Caco-2 (cell line): ENCODE measurements at regions of chr1 and their contacts with region 1.

Region 1: DNA sequence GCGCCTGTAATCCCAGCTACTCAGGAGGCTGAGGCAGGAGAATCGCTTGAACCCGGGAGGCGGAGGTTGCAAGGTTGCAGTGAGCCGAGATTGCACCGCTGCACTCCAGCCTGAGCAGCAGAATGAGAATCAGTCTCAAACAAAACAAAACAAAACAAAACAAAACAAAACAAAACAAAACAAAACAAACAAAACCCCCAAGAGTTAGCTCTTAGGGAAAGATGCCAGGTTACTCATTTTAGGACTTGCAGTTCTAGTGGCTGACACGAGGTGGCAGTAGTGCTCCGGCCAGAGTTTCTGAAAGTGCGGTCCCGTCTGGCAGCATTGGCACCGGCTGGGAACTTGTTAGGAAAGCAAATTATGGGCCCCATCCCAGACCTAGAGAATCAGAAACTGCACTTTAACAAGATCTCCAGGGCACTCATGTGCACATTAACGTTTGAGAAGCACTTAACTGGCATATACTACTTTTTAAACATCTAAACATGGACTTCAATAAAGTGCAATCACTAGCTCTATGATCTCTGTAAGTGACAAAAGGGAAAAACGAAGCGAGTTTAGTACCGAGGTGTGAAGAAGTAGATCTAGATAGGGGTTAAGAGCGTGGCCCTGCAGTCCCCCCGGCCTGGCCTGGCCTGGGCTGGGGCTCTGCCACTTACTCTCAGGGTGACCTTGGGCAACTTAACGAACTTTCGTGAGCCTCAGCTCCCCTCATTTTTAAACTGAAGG is 41.9 kb upstream of the TNFRSF1B start:
- DNase-seq: peak; percentile 56 to 78
- H3K4me3 ChIP-seq: no peak overlapping the region
- H3K4me3 Mint-ChIP-seq: no peak overlapping the region
- H3K27ac Mint-ChIP-seq: no peak overlapping the region
- H3K4me1 ChIP-seq: no peaks in the 10 kb centered on the region
- H3K4me1 Mint-ChIP-seq: no peaks in the 10 kb centered on the region
- H3K27me3 ChIP-seq: no peaks in the 10 kb centered on the region
- H3K27me3 Mint-ChIP-seq: peaks cover 6% of the 10 kb centered on the region
- CTCF ChIP-seq: peak; percentile 88 to 93

Region 2: DNA sequence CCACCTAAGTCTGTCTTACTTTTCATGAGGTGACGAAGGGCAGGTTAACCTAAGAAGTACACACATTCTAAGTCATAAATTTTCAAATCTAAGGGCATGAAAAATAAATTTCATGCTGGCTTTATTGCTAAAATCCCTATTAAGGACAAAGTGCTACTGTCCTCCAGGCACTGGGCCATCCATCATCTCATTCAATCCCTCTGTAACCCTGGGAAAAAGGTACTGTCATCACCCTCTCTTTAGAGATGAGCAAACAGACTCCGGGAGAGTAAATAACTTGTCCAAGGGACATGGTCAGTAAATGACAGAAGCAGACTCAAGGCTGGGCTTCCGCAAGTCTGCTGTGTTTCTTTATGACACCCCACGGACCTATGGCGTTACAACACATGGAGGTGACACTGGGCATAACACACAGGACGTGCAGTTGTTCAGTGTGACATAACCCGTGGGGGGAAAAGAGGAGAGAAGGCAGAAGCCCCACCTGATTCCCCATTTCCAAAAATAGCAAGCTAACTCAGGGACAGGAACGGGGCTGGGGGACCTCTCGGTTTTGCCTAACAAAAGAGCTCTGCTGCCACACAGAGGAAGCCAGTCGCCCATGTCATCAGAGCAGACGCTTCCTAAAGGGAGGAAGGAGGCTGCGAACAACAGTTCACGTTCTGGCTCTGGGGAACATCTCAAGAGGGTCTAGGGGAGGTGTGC is 1052.5 kb before region 1 on chr1:
- CTCF ChIA-PET with region 1: no interaction called
- POLR2A ChIA-PET with region 1: no interaction called
- intact Hi-C with region 1: no loop called
- DNase-seq: no peak
- H3K4me3 ChIP-seq: no peak overlapping the region
- H3K4me3 Mint-ChIP-seq: no peak overlapping the region
- H3K27ac Mint-ChIP-seq: no peak overlapping the region
- H3K4me1 ChIP-seq: no peaks in the 10 kb centered on the region
- H3K4me1 Mint-ChIP-seq: no peaks in the 10 kb centered on the region
- H3K27me3 ChIP-seq: no peaks in the 10 kb centered on the region
- H3K27me3 Mint-ChIP-seq: no peaks in the 10 kb centered on the region
- CTCF ChIP-seq: no peak

Region 3: GRCh38 chr1:12166834-12167492 is 42.1 kb after region 1 on chr1 and contains the start of gene TNFRSF1B:
- CTCF ChIA-PET with region 1: interaction called, 10 read pairs
- POLR2A ChIA-PET with region 1: interaction called, 4 read pairs
- intact Hi-C with region 1: no loop called
- DNase-seq: peak; percentile 48 to 74
- H3K4me3 ChIP-seq: peak within 1 kb of the TSS; percentile 38
- H3K4me3 Mint-ChIP-seq: peak within 1 kb of the TSS; percentile 74
- H3K27ac Mint-ChIP-seq: no peak within 1 kb of the TSS
- H3K4me1 ChIP-seq: peaks cover 6% of the 10 kb centered on the region
- H3K4me1 Mint-ChIP-seq: peaks cover 5% of the 10 kb centered on the region
- H3K27me3 ChIP-seq: no peaks in the 10 kb centered on the region
- H3K27me3 Mint-ChIP-seq: peaks cover 2% of the 10 kb centered on the region
- CTCF ChIP-seq: no peak
- total RNA-seq, gene TNFRSF1B: 2.6 and 3.5 TPM in 2 replicates

Region 4: DNA sequence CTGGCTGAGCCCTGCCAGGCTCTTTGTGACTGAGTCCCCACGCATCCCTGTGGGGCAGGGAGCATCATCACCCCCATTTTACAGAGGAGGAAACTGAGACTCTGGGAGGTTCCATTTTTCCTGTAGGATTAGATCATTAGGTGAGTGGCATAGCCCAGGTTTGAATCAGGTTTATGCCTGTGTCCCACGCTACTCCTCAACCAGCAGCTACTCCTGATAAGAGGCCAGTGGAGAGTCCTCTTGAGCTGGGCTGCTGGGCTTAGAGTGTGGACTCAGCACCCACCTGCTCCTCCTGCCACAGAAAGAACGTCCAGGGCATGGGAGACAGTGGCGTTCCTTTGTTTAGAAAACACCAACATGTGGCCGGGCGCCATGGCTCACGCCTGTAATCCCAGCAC is 72.6 kb after region 1 on chr1:
- CTCF ChIA-PET with region 1: interaction called, 13 read pairs
- POLR2A ChIA-PET with region 1: no interaction called
- intact Hi-C with region 1: no loop called
- DNase-seq: no peak
- H3K4me3 ChIP-seq: no peak overlapping the region
- H3K4me3 Mint-ChIP-seq: no peak overlapping the region
- H3K27ac Mint-ChIP-seq: no peak overlapping the region
- H3K4me1 ChIP-seq: no peaks in the 10 kb centered on the region
- H3K4me1 Mint-ChIP-seq: no peaks in the 10 kb centered on the region
- H3K27me3 ChIP-seq: no peaks in the 10 kb centered on the region
- H3K27me3 Mint-ChIP-seq: no peaks in the 10 kb centered on the region
- CTCF ChIP-seq: no peak

Region 5: DNA sequence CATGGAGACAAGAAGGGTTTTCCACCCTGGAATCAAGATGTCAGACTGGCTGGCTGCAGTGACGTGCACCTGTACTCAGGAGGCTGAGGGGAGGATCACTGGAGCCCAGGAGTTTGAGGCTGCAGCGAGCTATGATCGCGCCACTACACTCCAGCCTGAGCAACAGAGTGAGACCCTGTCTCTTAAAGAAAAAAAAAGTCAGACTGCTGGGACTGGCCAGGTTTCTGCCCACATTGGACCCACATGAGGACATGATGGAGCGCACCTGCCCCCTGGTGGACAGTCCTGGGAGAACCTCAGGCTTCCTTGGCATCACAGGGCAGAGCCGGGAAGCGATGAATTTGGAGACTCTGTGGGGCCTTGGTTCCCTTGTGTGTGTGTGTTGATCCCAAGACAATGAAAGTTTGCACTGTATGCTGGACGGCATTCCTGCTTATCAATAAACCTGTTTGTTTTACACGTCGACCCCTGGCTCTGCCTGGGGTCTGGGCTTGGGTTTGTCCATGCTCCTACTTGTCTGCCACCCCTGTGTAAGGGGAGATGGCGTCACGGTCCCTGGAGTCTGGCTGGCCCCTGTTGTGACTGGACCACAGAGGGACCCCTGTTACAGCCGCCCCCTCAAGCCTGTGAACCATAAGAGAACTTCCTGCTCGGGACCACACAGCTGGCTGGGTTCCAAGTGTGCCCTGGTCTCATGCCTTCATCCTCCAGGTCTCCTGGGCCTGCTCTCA is 84.1 kb after region 1 on chr1:
- CTCF ChIA-PET with region 1: interaction called, 29 read pairs
- POLR2A ChIA-PET with region 1: no interaction called
- intact Hi-C with region 1: loop called (anchors 1 kb)
- DNase-seq: peak; percentile 74 to 87
- H3K4me3 ChIP-seq: no peak overlapping the region
- H3K4me3 Mint-ChIP-seq: no peak overlapping the region
- H3K27ac Mint-ChIP-seq: no peak overlapping the region
- H3K4me1 ChIP-seq: no peaks in the 10 kb centered on the region
- H3K4me1 Mint-ChIP-seq: no peaks in the 10 kb centered on the region
- H3K27me3 ChIP-seq: no peaks in the 10 kb centered on the region
- H3K27me3 Mint-ChIP-seq: peaks cover 3% of the 10 kb centered on the region
- CTCF ChIP-seq: peak; percentile 88 to 91

Region 6: GRCh38 chr1:12296623-12297022 is 171.8 kb after region 1 on chr1:
- CTCF ChIA-PET with region 1: no interaction called
- POLR2A ChIA-PET with region 1: no interaction called
- intact Hi-C with region 1: no loop called
- DNase-seq: no peak
- H3K4me3 ChIP-seq: no peak overlapping the region
- H3K4me3 Mint-ChIP-seq: no peak overlapping the region
- H3K27ac Mint-ChIP-seq: no peak overlapping the region
- H3K4me1 ChIP-seq: no peaks in the 10 kb centered on the region
- H3K4me1 Mint-ChIP-seq: peaks cover 6% of the 10 kb centered on the region
- H3K27me3 ChIP-seq: no peaks in the 10 kb centered on the region
- H3K27me3 Mint-ChIP-seq: no peaks in the 10 kb centered on the region
- CTCF ChIP-seq: no peak

Region 7: GRCh38 chr1:12407050-12407961 is 282.4 kb after region 1 on chr1:
- CTCF ChIA-PET with region 1: no interaction called
- POLR2A ChIA-PET with region 1: no interaction called
- intact Hi-C with region 1: no loop called
- DNase-seq: no peak
- H3K4me3 ChIP-seq: no peak overlapping the region
- H3K4me3 Mint-ChIP-seq: no peak overlapping the region
- H3K27ac Mint-ChIP-seq: no peak overlapping the region
- H3K4me1 ChIP-seq: peaks cover 24% of the 10 kb centered on the region
- H3K4me1 Mint-ChIP-seq: no peaks in the 10 kb centered on the region
- H3K27me3 ChIP-seq: no peaks in the 10 kb centered on the region
- H3K27me3 Mint-ChIP-seq: no peaks in the 10 kb centered on the region
- CTCF ChIP-seq: peak in 1 of 2 experiments; percentile 17